SK-N-SH (cell line): ENCODE measurements at regions of chr11 and their contacts with region 1.

Region 1: DNA sequence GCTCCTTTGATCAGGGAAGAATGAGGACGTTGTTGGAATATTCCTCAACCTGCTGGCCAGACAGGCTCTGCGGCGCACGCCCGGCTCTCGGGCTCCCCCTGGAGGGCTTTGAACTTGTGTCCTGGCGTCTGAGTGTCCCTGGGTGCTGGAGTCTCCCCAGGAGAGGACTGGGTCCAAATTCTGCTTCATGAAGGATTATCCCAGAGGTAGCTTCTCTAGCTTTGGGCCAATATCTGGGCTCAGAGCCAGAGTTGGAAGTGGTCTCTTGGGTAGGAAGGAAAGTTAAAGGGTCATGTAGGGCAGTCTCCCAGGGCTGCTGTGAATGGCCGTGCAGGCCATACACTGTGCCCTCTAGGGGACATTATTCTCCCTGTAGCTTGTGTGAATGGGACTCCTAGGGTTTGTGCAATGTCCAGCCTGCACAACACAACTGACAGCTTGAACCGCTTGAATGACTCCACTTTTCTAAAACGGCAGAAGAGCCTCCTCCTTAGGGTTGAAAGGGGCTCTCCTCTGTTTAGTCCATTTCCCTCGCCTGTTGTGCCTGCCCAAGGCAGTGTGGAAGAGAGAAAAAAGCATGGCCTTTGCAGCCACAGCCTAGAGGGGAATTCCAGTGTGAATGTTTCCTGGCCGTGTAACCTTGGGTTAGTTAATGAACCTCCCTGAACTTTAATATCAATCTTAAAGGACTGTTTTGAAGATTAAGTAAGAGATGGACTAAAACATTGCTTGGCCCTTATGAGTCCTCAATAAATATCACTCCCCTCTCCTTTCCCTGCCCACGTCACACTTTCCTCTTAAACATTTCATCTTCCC is 111.2 kb upstream of the THY1 start:
- DNase-seq: peak; percentile 81
- H3K4me3 ChIP-seq: peak overlapping the region in 1 of 2 experiments; percentile 14; a peak in 1 of 4 replicates
- H3K27ac ChIP-seq: no peak overlapping the region
- H3K4me1 ChIP-seq: no peaks in the 10 kb centered on the region; a peak in 1 of 4 replicates
- H3K27me3 ChIP-seq: peaks cover 19% of the 10 kb centered on the region; the same call in 1 of the 2 replicates
- CTCF ChIP-seq: peak; percentile 90
- EP300 ChIP-seq: no peak
- RAD21 ChIP-seq: peak; percentile 69

Region 2: GRCh38 chr11:119290894-119291497 is 243.1 kb before region 1 on chr11:
- CTCF ChIA-PET with region 1: no interaction called
- POLR2A ChIA-PET with region 1: no interaction called
- DNase-seq: no peak
- H3K4me3 ChIP-seq: no peak overlapping the region
- H3K27ac ChIP-seq: no peak overlapping the region
- H3K4me1 ChIP-seq: no peaks in the 10 kb centered on the region
- H3K27me3 ChIP-seq: no peaks in the 10 kb centered on the region
- CTCF ChIP-seq: no peak
- EP300 ChIP-seq: no peak
- RAD21 ChIP-seq: no peak

Region 3: DNA sequence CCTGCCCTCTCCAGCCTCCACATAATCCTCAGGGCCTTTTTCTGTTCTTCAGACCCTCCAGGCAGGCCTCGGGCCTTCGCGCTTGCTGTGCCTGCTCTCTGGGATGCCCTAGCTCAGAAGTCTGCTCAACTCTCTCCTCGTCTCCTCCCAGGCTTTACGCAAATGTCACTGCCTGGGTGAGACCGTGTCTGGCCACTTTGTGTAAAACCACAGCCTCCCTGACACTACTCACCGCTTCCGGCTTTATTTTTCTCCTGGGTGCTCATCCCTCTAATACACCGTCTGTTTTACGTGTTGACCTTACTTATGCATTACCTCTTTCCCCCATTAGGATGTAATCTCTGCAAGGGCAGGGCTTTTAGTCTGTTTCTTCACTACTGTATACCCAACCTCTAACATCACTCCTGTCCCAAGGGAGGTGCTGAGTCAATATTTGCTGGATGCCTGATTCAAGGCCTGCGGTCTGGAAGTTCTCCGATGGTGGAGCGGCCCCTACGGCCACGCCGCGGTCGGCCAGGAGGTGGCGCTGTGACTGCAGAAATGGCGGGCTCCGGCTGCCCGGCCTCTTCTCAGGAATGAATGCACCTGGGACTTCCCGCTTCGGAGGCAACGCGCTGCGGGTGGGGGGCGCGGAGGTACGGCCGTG is 53.0 kb before region 1 on chr11:
- CTCF ChIA-PET with region 1: interaction called, 40 read pairs
- POLR2A ChIA-PET with region 1: no interaction called
- DNase-seq: peak; percentile 92
- H3K4me3 ChIP-seq: peak overlapping the region in 1 of 2 experiments; percentile 53; a peak in 1 of 4 replicates
- H3K27ac ChIP-seq: no peak overlapping the region
- H3K4me1 ChIP-seq: peaks cover 0 to 5% of the 10 kb centered on the region in 2 experiments; a peak in 1 of 4 replicates
- H3K27me3 ChIP-seq: peaks cover 6% of the 10 kb centered on the region; the same call in 1 of the 2 replicates
- CTCF ChIP-seq: peak; percentile 97
- EP300 ChIP-seq: no peak
- RAD21 ChIP-seq: peak; percentile 95

Region 4: DNA sequence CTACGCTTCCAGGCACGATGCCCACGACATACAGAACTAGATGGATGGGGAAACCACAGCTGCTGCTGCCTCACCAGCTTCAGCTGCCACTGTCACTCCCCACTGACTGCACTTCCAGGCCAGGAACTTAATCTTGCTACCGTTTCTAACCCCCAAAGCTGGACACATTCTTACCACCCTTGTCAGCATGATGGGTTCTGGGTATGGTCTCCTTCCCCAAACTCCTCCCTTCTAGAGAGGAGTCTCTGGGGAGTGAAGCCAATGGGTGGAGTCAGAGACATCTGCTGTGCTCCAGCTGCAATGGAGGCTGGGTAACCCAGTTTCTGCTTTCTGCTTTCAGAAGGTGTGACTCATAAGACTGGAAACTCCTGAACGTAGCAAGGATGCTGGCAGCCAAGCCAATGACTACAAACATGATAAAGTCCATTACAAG is 24.1 kb before region 1 on chr11:
- CTCF ChIA-PET with region 1: interaction called, 57 read pairs
- POLR2A ChIA-PET with region 1: no interaction called
- DNase-seq: no peak
- H3K4me3 ChIP-seq: no peak overlapping the region
- H3K27ac ChIP-seq: no peak overlapping the region
- H3K4me1 ChIP-seq: peaks cover 0 to 27% of the 10 kb centered on the region in 2 experiments; a peak in 1 of 4 replicates
- H3K27me3 ChIP-seq: no peaks in the 10 kb centered on the region; the same call in 1 of the 2 replicates
- CTCF ChIP-seq: no peak
- EP300 ChIP-seq: no peak
- RAD21 ChIP-seq: no peak

Region 5: DNA sequence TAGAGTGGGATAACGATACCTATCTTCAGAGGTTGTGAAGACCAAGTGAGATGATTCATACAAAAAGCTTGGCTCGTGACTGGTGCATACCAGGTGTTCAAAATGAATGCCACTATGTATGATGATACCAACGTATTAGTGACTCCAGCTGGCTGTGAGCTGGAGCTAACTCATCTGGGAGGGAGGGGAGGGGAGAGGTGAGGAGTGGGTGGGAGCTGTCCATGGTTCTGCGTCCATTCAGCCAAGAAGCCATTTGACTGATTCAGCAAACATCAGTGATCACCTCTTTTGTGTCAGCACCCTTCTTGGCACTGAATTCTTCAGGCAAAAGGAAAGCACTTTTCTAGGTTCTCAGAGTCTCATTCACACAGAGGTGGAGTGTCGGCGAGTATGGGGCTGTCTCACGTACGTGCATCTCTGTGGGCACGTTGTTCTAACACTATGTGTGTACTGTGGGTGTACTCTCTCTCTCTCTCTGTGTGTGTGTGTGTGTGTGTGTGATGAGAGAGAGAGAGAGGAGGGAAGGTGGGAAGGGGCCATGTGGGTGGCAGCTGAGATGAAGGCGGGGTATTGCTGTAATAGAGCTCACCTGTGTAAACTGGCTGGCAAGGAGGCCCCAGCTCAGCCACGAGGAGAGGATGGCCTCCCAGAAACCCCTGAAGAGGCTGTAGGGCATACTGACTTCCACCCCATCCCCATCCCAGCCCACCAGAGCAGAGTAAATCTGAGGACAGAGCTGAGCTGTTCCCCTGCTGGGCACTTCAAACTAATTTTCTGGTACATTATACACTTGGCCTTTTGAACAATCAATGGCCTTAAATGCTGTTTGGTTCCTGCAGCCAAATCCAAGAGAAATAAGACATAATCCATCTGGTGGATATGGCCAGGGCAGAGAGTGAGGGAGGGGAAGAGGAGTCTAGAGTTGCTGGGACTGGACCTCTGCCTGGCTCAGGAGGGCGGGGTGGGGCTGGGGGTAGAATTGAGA is 15.1 kb before region 1 on chr11:
- CTCF ChIA-PET with region 1: interaction called, 57 read pairs
- POLR2A ChIA-PET with region 1: no interaction called
- DNase-seq: no peak
- H3K4me3 ChIP-seq: no peak overlapping the region
- H3K27ac ChIP-seq: no peak overlapping the region
- H3K4me1 ChIP-seq: no peaks in the 10 kb centered on the region; a peak in 1 of 4 replicates
- H3K27me3 ChIP-seq: peaks cover 14% of the 10 kb centered on the region; the same call in 1 of the 2 replicates
- CTCF ChIP-seq: no peak
- EP300 ChIP-seq: no peak
- RAD21 ChIP-seq: no peak

Region 6: GRCh38 chr11:119550053-119550752 is 16.1 kb after region 1 on chr11:
- CTCF ChIA-PET with region 1: interaction called, 15 read pairs
- POLR2A ChIA-PET with region 1: no interaction called
- DNase-seq: no peak
- H3K4me3 ChIP-seq: no peak overlapping the region
- H3K27ac ChIP-seq: no peak overlapping the region
- H3K4me1 ChIP-seq: no peaks in the 10 kb centered on the region
- H3K27me3 ChIP-seq: no peaks in the 10 kb centered on the region
- CTCF ChIP-seq: no peak
- EP300 ChIP-seq: no peak
- RAD21 ChIP-seq: no peak

Region 7: DNA sequence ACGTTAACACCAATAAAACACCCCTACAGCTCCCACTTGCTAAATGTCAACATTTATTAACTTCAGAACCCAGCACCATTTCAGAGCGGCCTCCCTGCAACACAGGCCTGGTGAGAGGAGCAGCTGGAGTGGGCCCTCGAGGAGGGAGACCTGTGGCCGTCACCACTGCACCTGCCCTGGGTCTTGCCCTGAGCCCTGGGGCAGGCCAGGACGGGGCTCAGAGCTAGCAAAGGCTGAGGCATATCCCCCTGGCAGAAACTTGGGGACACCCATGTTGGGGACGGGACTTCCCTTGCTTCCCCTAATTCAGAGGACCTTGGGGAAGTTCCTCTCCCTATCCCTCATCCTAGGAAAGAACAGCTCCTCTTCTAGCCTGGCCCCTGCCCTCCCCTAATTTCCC is 26.2 kb after region 1 on chr11:
- CTCF ChIA-PET with region 1: interaction called, 43 read pairs
- POLR2A ChIA-PET with region 1: no interaction called
- DNase-seq: no peak
- H3K4me3 ChIP-seq: no peak overlapping the region
- H3K27ac ChIP-seq: no peak overlapping the region
- H3K4me1 ChIP-seq: no peaks in the 10 kb centered on the region
- H3K27me3 ChIP-seq: no peaks in the 10 kb centered on the region
- CTCF ChIP-seq: no peak
- EP300 ChIP-seq: no peak
- RAD21 ChIP-seq: no peak

Region 8: DNA sequence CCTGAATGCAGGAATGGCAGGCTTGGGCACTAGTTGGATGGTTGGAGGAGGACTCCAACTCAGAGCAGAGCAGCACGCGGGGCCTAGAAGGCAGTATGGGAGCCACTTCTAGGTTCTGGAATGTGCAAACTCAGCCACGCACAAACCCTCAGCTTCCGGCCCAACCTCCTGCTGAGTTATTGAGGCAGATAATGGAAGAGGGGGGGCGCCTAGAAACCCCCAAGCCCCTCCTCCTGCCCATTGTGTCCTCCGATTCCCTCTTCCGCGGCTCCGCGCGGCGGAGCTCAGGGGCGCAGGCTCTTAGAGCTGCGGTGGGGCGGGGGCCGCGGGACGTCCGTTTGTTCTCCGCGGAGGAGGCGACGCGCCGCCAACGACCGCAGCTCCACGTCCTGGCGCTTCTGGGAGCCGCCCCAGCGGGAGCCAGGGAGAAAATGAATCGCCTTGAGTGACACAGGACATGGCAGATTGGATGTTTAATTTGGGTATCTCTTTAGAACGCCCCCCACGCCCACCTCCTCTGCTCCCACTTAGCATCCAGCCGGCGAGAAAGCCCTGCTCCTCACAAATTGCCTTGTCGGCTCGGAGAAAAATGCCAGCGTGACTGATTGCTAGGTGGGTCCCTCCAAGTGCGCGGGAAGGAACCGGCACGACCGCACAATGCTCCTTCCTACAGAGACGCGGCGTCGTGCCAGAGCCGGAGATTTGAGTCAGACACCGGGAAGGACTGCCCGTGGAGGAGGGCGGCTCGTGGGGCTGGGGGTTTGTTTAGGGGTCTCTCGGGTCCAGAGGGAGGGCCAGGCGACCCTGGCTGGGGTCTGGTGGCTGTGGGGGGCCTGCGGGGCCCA is 50.3 kb after region 1 on chr11:
- CTCF ChIA-PET with region 1: interaction called, 14 read pairs
- POLR2A ChIA-PET with region 1: no interaction called
- DNase-seq: peak; percentile 83
- H3K4me3 ChIP-seq: peak overlapping the region; percentile 50 to 62
- H3K27ac ChIP-seq: no peak overlapping the region
- H3K4me1 ChIP-seq: peaks cover 7 to 13% of the 10 kb centered on the region in 2 experiments; a peak in 2 of 4 replicates
- H3K27me3 ChIP-seq: no peaks in the 10 kb centered on the region
- CTCF ChIP-seq: no peak
- EP300 ChIP-seq: no peak; a peak in 1 of 4 replicates
- RAD21 ChIP-seq: no peak